Panc1 (cell line): ENCODE measurements at regions of chr6 and their contacts with region 1.

Region 1: GRCh38 chr6:92777146-92777740 is 642.1 kb downstream of the EPHA7 start:
- DNase-seq: peak; percentile 32
- ATAC-seq: no peak
- H3K4me3 ChIP-seq: no peak overlapping the region
- H3K27ac ChIP-seq: no peak overlapping the region
- H3K4me1 ChIP-seq: no peaks in the 10 kb centered on the region
- H3K27me3 ChIP-seq: no peaks in the 10 kb centered on the region
- CTCF ChIP-seq: peak; percentile 59; the same call in 1 of the 2 replicates

Region 2: GRCh38 chr6:91081452-91082067 is 1695.7 kb before region 1 on chr6:
- CTCF ChIA-PET with region 1: no interaction called
- POLR2A ChIA-PET with region 1: no interaction called
- in situ Hi-C with region 1: no loop called
- intact Hi-C with region 1: loop called (anchors 10 kb)
- DNase-seq: peak; percentile 22
- ATAC-seq: peak; percentile 78
- H3K4me3 ChIP-seq: no peak overlapping the region
- H3K27ac ChIP-seq: no peak overlapping the region
- H3K4me1 ChIP-seq: no peaks in the 10 kb centered on the region; the same call in 1 of the 2 replicates
- H3K27me3 ChIP-seq: no peaks in the 10 kb centered on the region
- CTCF ChIP-seq: peak; percentile 75

Region 3: DNA sequence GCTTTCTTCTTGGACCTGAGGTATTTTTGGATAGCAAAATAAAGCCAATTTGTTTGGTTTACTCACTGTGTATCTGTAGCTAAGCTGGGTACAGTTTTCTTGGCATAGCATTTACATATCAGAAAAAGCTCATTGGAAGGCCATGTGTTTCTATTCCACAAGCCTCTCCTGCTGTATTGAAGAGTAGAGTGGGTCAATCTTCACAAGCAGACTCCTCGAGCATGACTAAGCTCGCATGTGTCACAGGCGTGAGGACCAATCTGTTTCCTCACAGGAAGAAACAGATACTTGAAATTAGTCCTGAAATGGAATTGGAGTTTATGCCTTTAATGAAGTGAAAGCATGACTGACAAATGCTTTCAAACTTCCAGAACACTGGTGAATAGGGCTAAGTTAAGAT is 911.4 kb before region 1 on chr6:
- CTCF ChIA-PET with region 1: no interaction called
- POLR2A ChIA-PET with region 1: interaction called, 11 read pairs
- in situ Hi-C with region 1: no loop called
- intact Hi-C with region 1: no loop called
- DNase-seq: no peak
- ATAC-seq: no peak
- H3K4me3 ChIP-seq: no peak overlapping the region
- H3K27ac ChIP-seq: no peak overlapping the region
- H3K4me1 ChIP-seq: no peaks in the 10 kb centered on the region
- H3K27me3 ChIP-seq: no peaks in the 10 kb centered on the region
- CTCF ChIP-seq: no peak

Region 4: GRCh38 chr6:92147246-92147645 is 630.0 kb before region 1 on chr6:
- CTCF ChIA-PET with region 1: no interaction called
- POLR2A ChIA-PET with region 1: no interaction called
- in situ Hi-C with region 1: no loop called
- intact Hi-C with region 1: loop called (anchors 10 kb)
- DNase-seq: no peak
- ATAC-seq: no peak
- H3K4me3 ChIP-seq: no peak overlapping the region
- H3K27ac ChIP-seq: no peak overlapping the region
- H3K4me1 ChIP-seq: no peaks in the 10 kb centered on the region
- H3K27me3 ChIP-seq: no peaks in the 10 kb centered on the region
- CTCF ChIP-seq: no peak